ENCODE measurements at regions of chr1 and their contacts with region 1.

Region 1: GRCh38 chr1:172398970-172399755 is 21.3 kb upstream of the C1orf105 start:
- DNase-seq: peak; percentile 65
- H3K4me3 Mint-ChIP-seq: peak overlapping the region; percentile 13
- H3K27ac Mint-ChIP-seq: peak overlapping the region; percentile 76
- H3K4me1 Mint-ChIP-seq: peaks cover 48% of the 10 kb centered on the region
- H3K27me3 Mint-ChIP-seq: no peaks in the 10 kb centered on the region
- CTCF ChIP-seq: peak; percentile 43

Region 2: GRCh38 chr1:170720661-170721060 is 1678.5 kb before region 1 on chr1:
- CTCF ChIA-PET with region 1: no interaction called
- intact Hi-C with region 1: no loop called
- DNase-seq: no peak
- H3K4me3 Mint-ChIP-seq: no peak overlapping the region
- H3K27ac Mint-ChIP-seq: no peak overlapping the region
- H3K4me1 Mint-ChIP-seq: no peaks in the 10 kb centered on the region
- H3K27me3 Mint-ChIP-seq: no peaks in the 10 kb centered on the region
- CTCF ChIP-seq: no peak

Region 3: GRCh38 chr1:172089768-172090510 is 309.2 kb before region 1 on chr1:
- CTCF ChIA-PET with region 1: interaction called, 14 read pairs
- intact Hi-C with region 1: loop called (anchors 1 kb)
- DNase-seq: peak; percentile 83
- H3K4me3 Mint-ChIP-seq: no peak overlapping the region
- H3K27ac Mint-ChIP-seq: no peak overlapping the region
- H3K4me1 Mint-ChIP-seq: peaks cover 11% of the 10 kb centered on the region
- H3K27me3 Mint-ChIP-seq: no peaks in the 10 kb centered on the region
- CTCF ChIP-seq: peak; percentile 86

Region 4: DNA sequence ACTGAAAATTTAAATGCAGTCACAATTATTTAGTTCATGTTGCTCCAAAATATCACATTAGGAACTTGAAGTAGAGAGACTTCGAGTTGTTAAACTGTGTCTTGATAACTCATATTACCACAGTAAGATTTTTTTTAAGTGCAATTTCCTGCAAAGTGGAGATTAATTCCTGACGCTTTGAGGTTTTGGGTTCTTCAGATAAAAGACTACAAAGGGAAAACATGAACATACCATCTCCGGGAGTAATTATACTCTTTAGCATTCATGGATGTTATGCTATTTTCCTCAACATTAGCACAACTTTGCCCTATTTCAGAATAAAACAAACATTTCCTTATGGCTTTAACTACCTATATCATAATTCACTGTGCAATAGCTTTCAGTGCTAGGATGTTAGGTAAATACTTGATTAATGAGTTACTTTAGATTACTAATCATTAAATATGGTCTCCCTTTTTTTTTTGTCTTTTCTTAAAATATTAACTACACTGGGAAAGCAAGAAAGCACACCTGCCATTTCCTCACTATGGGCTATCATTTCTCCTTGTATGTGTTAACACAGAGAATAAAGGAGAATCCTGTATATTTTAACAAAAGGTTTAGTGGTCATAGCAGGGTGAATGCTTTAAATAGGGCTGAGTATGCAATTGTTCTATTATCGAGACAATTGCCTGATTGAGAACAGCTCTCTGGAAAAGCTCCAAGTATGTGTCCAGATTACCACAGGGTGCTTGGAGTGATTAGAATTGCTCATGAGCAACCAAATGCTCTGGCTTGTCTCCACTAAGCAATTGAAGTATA is 231.2 kb before region 1 on chr1:
- CTCF ChIA-PET with region 1: interaction called, 6 read pairs
- intact Hi-C with region 1: loop called (anchors 2 kb)
- DNase-seq: peak; percentile 62
- H3K4me3 Mint-ChIP-seq: peak overlapping the region; percentile 27
- H3K27ac Mint-ChIP-seq: peak overlapping the region; percentile 58
- H3K4me1 Mint-ChIP-seq: peaks cover 73% of the 10 kb centered on the region
- H3K27me3 Mint-ChIP-seq: no peaks in the 10 kb centered on the region
- CTCF ChIP-seq: no peak

Region 5: GRCh38 chr1:172278478-172278877 is 120.7 kb before region 1 on chr1:
- CTCF ChIA-PET with region 1: interaction called, 3 read pairs
- intact Hi-C with region 1: loop called (anchors 5 kb)
- DNase-seq: no peak
- H3K4me3 Mint-ChIP-seq: no peak overlapping the region
- H3K27ac Mint-ChIP-seq: no peak overlapping the region
- H3K4me1 Mint-ChIP-seq: peaks cover 51% of the 10 kb centered on the region
- H3K27me3 Mint-ChIP-seq: no peaks in the 10 kb centered on the region
- CTCF ChIP-seq: no peak

Region 6: GRCh38 chr1:172338295-172338735 is 60.8 kb before region 1 on chr1:
- CTCF ChIA-PET with region 1: no interaction called
- intact Hi-C with region 1: no loop called
- DNase-seq: no peak
- H3K4me3 Mint-ChIP-seq: no peak overlapping the region
- H3K27ac Mint-ChIP-seq: no peak overlapping the region
- H3K4me1 Mint-ChIP-seq: peaks cover 22% of the 10 kb centered on the region
- H3K27me3 Mint-ChIP-seq: no peaks in the 10 kb centered on the region
- CTCF ChIP-seq: no peak

Region 7: GRCh38 chr1:172357753-172358385 is 41.3 kb before region 1 on chr1:
- CTCF ChIA-PET with region 1: interaction called, 11 read pairs
- intact Hi-C with region 1: loop called (anchors 1 kb)
- DNase-seq: no peak
- H3K4me3 Mint-ChIP-seq: peak overlapping the region; percentile 11
- H3K27ac Mint-ChIP-seq: no peak overlapping the region
- H3K4me1 Mint-ChIP-seq: peaks cover 70% of the 10 kb centered on the region
- H3K27me3 Mint-ChIP-seq: no peaks in the 10 kb centered on the region
- CTCF ChIP-seq: no peak

Region 8: GRCh38 chr1:172410027-172410426 is 10.9 kb after region 1 on chr1:
- CTCF ChIA-PET with region 1: no interaction called
- intact Hi-C with region 1: no loop called
- DNase-seq: no peak
- H3K4me3 Mint-ChIP-seq: no peak overlapping the region
- H3K27ac Mint-ChIP-seq: no peak overlapping the region
- H3K4me1 Mint-ChIP-seq: peaks cover 3% of the 10 kb centered on the region
- H3K27me3 Mint-ChIP-seq: no peaks in the 10 kb centered on the region
- CTCF ChIP-seq: no peak

Measured in Calu3 (cell line).